Dorsolateral prefrontal cortex (tissue), 120 donors: ENCODE measurements at regions of chr11 and their contacts with region 1.

Region 1: DNA sequence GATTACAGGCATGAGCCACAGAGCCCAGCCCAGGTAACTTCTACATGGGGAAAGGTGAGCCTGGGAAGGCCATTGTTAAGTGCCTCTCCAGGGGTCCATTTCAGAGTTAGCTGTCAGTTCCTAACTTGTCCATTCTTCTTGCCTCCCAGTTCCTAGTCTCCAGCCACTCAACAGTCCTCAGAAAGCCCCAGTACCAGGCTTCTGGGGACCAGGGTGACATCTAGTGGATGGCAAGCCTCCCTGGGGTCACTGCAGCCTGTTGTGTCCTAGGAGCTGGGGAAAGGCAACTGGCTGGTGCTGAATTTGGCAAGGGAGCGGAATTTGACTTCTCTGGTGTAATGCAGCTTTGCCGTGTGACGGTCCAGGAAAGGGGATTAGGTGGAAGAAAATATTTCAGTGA is 2.1 kb downstream of the LGALS12 start:
- DNase-seq: peak; percentile 18 to 84 (median 75)
- H3K4me3 ChIP-seq: no peak overlapping the region
- H3K27ac ChIP-seq: peak overlapping the region in 48 of 59 donors; percentile 12 to 99 (median 96)
- H3K27me3 ChIP-seq: no peaks in the 10 kb centered on the region
- CTCF ChIP-seq: peak in 54 of 56 donors; percentile 21 to 84 (median 63)

Region 2: GRCh38 chr11:63490551-63491239 is 17.3 kb before region 1 on chr11 and contains the start of gene PLAAT5:
- intact Hi-C with region 1: loop called in 1 of 2 experiments (anchors 2 kb)
- DNase-seq: peak in 4 of 10 donors; percentile 31 to 66 (median 48)
- H3K4me3 ChIP-seq: peak within 1 kb of the TSS; percentile 47 to 78 (median 67)
- H3K27ac ChIP-seq: peak within 1 kb of the TSS; percentile 13 to 94 (median 87)
- H3K27me3 ChIP-seq: no peaks in the 10 kb centered on the region
- CTCF ChIP-seq: peak in 9 of 56 donors; percentile 9 to 39 (median 15)
- total RNA-seq, gene PLAAT5: 1.7 to 13.3 (median 6.4) TPM

Region 3: GRCh38 chr11:63582935-63583677 is 75.1 kb after region 1 on chr11:
- intact Hi-C with region 1: loop called in 1 of 2 experiments (anchors 2 kb)
- DNase-seq: peak in 1 of 10 donors; percentile 5
- H3K4me3 ChIP-seq: peak overlapping the region in 4 of 59 donors; percentile 7 to 31 (median 16)
- H3K27ac ChIP-seq: peak overlapping the region; percentile 77 to 100 (median 97)
- H3K27me3 ChIP-seq: no peaks in the 10 kb centered on the region
- CTCF ChIP-seq: peak in 1 of 56 donors; percentile 9

Region 4: GRCh38 chr11:63635762-63636465 is 127.9 kb after region 1 on chr11:
- intact Hi-C with region 1: loop called in 1 of 2 experiments (anchors 2 kb)
- DNase-seq: peak; percentile 54 to 84 (median 70)
- H3K4me3 ChIP-seq: no peak overlapping the region
- H3K27ac ChIP-seq: peak overlapping the region in 44 of 59 donors; percentile 4 to 86 (median 62)
- H3K27me3 ChIP-seq: no peaks in the 10 kb centered on the region
- CTCF ChIP-seq: peak; percentile 51 to 98 (median 90)

Region 5: DNA sequence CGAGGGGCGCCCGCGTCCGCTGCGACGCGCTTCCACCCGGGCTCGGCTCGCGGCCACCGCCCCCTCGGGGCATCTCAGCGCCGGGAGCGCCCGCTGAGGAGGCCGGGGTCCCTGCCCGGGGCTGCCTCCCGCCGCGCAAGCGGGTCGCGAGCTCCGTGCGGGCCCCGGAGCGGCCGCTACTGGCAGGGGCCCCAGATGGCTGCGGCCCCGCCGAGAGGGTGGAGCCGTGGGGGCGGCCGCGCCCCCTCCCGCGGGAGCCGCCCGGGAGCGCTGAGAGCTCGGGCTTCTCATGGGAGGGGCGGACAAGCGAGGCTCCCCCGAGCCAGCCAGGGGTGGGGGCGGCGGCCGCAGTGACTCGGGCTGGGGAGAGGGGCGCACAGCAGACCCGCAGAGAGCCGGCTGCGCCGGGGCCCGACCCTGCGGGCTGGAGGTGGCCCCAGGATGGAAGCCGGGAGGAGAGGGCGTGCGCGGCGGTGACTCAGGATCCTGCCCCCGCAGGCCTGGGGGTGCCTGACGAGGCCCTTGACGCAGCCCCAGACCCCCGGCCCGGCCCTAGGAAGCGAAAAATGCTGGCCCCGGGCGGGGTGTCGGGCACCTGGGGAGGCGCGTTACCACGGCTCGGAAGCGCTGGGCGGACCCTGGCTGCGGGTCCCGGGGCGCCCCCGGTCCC is 261.2 kb after region 1 on chr11:
- intact Hi-C with region 1: no loop called
- DNase-seq: peak in 3 of 10 donors; percentile 15 to 66 (median 46)
- H3K4me3 ChIP-seq: peak overlapping the region; percentile 53 to 87 (median 75)
- H3K27ac ChIP-seq: peak overlapping the region in 52 of 59 donors; percentile 14 to 89 (median 72)
- H3K27me3 ChIP-seq: no peaks in the 10 kb centered on the region
- CTCF ChIP-seq: peak in 1 of 56 donors; percentile 12